Ascending aorta (tissue), 2 donors: ENCODE measurements at regions of chr6 and their contacts with region 1.

Region 1: GRCh38 chr6:82076916-82077315 is 170.6 kb downstream of the IBTK start:
- DNase-seq: no peak
- H3K4me3 ChIP-seq: no peak overlapping the region
- H3K27ac ChIP-seq: peak overlapping the region in 1 of 2 donors; percentile 28
- H3K4me1 ChIP-seq: peaks cover 2 to 16% of the 10 kb centered on the region in 2 donors
- H3K27me3 ChIP-seq: no peaks in the 10 kb centered on the region
- CTCF ChIP-seq: peak in 1 of 3 experiments; percentile 28

Region 2: GRCh38 chr6:81606965-81607381 is 469.9 kb before region 1 on chr6:
- intact Hi-C with region 1: no loop called
- DNase-seq: no peak
- H3K4me3 ChIP-seq: no peak overlapping the region
- H3K27ac ChIP-seq: peak overlapping the region; percentile 37 to 55
- H3K4me1 ChIP-seq: no peaks in the 10 kb centered on the region
- H3K27me3 ChIP-seq: no peaks in the 10 kb centered on the region
- CTCF ChIP-seq: no peak

Region 3: GRCh38 chr6:82144007-82144851 is 67.3 kb after region 1 on chr6:
- intact Hi-C with region 1: loop called (anchors 5 kb)
- DNase-seq: peak; percentile 15 to 79
- H3K4me3 ChIP-seq: peak overlapping the region in 1 of 2 donors; percentile 46
- H3K27ac ChIP-seq: peak overlapping the region; percentile 56 to 64
- H3K4me1 ChIP-seq: peaks cover 0 to 13% of the 10 kb centered on the region in 2 donors
- H3K27me3 ChIP-seq: no peaks in the 10 kb centered on the region
- CTCF ChIP-seq: no peak

Region 4: DNA sequence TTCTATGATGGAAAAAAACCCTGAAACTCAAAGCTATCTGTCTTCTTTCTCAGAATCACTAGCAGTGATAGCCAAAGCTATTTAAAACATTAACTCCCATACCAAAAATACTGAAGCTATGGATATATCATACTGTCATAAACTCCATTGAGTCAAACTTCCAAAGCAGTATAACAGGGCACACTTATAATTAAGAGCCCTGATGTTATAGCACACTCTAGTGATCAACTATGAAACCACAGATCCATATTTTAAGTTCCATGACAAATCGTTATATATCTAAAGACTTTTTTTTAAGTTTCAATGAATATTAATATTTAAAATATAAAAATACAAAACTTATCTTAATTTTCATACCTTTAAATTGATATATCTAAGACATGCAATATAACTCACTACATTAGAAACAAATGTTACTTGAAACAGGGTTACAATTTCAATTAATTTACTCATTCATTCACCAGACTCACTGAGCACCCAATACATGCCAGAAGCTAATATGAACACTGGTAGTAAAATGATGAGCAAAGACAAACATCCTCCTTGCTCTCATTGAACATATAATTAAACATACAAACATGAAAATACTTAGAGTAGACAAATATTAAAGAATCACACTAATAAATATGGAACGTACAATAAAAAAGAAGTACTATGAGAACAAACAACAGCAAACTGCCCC is 101.3 kb after region 1 on chr6:
- intact Hi-C with region 1: loop called (anchors 5 kb)
- DNase-seq: no peak
- H3K4me3 ChIP-seq: no peak overlapping the region
- H3K27ac ChIP-seq: no peak overlapping the region
- H3K4me1 ChIP-seq: no peaks in the 10 kb centered on the region
- H3K27me3 ChIP-seq: no peaks in the 10 kb centered on the region
- CTCF ChIP-seq: peak; percentile 23 to 62 (median 61)